ENCODE measurements at regions of chr11 and their contacts with region 1.

Region 1: DNA sequence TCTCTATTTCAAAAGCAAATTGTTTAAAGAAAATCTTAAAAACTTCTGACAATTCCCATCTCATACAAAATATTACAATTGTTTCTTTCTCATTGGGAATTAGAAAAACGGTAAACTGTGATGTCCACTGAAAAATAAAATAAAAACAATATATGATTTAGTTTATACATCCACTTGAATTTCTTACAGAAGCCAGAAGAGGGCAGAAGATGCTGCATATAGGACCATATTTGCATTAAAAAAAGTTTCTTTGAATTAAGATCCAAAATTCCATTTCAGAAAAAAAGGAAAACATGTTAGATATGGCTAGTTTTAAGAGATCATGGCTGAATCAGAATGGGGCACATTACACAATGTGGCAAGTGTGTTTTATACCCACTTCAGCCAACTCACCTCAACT is 39.3 kb upstream of the LRRC4C start:
- DNase-seq: no peak
- ATAC-seq: no peak

Region 2: GRCh38 chr11:41446107-41446506 is 52.6 kb before region 1 on chr11:
- intact Hi-C with region 1: no loop called
- DNase-seq: no peak
- ATAC-seq: no peak

Region 3: DNA sequence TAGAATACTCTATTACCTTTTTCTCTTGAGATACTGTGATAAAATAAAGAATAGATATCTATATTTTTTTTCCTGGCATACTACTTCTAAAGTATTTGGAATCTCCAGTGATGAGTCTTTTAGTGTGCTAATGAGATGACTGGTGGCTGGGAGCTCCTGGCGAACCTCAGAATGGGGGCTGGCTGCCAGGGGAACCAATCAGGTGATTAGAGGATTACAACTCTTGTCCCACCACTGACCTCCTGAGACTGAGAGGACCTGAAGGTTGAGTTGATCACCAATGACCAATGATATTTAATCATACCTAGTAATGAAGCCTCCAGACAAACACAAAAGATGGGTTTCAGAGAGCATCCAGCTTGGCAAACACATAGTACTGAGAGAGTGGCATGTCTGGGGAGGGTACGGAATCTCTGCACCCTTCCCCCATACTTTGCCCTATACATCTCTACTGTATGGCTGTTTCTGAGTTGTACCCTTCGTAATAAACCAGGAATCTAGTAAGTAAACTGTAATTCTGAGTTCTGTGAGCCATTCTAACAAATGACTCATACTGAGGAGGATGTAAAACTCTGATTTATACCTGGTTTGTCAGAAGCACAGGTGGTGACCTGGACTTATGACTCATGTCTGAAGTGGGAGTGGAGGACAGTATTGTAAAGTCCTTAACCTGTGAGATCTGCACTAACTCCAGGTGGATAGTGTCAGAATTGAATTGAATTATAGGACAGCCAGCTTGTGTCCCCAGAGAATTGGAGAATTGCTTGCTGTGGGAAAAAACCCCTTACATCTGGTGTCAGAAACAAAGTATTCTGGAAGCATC is 286.0 kb after region 1 on chr11:
- intact Hi-C with region 1: no loop called
- DNase-seq: no peak
- ATAC-seq: no peak

Region 4: GRCh38 chr11:42390116-42390515 is 891.4 kb after region 1 on chr11:
- intact Hi-C with region 1: loop called (anchors 5 kb)
- DNase-seq: no peak
- ATAC-seq: no peak